ENCODE measurements at regions of chr13 and their contacts with region 1.

Region 1: DNA sequence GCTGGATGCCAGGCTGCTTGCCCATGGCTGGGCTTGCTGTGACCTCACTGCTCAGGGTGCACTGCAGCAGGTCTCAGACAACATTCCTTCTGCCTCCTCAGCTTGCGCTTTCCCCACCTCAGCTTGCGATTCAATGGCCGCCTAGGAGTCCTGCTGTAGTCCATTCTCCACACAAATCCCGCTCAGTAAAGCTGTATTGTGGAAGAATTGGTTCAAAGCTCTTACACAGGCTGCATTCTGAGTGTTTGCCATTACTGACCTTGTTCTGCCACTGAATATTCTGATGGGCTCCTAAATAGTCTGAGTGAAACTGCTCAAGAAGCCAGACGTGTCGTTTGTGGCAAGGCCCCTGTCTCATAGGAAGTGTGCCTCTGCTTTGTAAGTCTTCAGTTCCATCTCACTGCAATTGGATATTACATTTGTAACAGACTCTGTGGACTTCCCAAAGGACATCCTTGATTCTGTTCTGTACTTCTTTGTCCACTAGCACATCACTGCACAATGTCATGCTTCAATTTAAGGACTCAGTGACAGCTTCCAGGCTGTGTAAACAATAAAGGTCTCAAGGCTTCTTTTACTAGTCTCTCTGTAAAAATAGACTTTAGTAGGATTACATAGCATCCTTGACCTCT is 49.8 kb downstream of the KATNAL1 start:
- DNase-seq: no peak
- H3K4me3 Mint-ChIP-seq: no peak overlapping the region
- H3K27ac Mint-ChIP-seq: no peak overlapping the region
- H3K4me1 Mint-ChIP-seq: no peaks in the 10 kb centered on the region
- H3K27me3 Mint-ChIP-seq: no peaks in the 10 kb centered on the region
- CTCF ChIP-seq: no peak

Region 2: GRCh38 chr13:30551189-30551588 is 293.6 kb after region 1 on chr13:
- CTCF ChIA-PET with region 1: no interaction called
- POLR2A ChIA-PET with region 1: no interaction called
- intact Hi-C with region 1: loop called (anchors 2 kb)
- DNase-seq: peak; percentile 54
- H3K4me3 Mint-ChIP-seq: no peak overlapping the region
- H3K27ac Mint-ChIP-seq: no peak overlapping the region
- H3K4me1 Mint-ChIP-seq: no peaks in the 10 kb centered on the region
- H3K27me3 Mint-ChIP-seq: no peaks in the 10 kb centered on the region
- CTCF ChIP-seq: peak; percentile 17

Region 3: GRCh38 chr13:30572859-30573275 is 315.3 kb after region 1 on chr13:
- CTCF ChIA-PET with region 1: no interaction called
- POLR2A ChIA-PET with region 1: no interaction called
- intact Hi-C with region 1: loop called (anchors 5 kb)
- DNase-seq: peak; percentile 54
- H3K4me3 Mint-ChIP-seq: peak overlapping the region; percentile 68
- H3K27ac Mint-ChIP-seq: peak overlapping the region; percentile 89
- H3K4me1 Mint-ChIP-seq: peaks cover 38% of the 10 kb centered on the region
- H3K27me3 Mint-ChIP-seq: no peaks in the 10 kb centered on the region
- CTCF ChIP-seq: peak; percentile 24

Measured in MCF 10A (cell line).